Activated B cell treated with CpG ODN at 0.5 μM for 24 hours (primary cell): ENCODE measurements at regions of chr6 and their contacts with region 1.

Region 1: GRCh38 chr6:17691925-17692538 is 14.7 kb downstream of the NUP153 start:
- DNase-seq: no peak
- ATAC-seq: no peak
- H3K4me3 Mint-ChIP-seq: no peak overlapping the region
- H3K27ac Mint-ChIP-seq: no peak overlapping the region
- H3K4me1 Mint-ChIP-seq: peaks cover 51% of the 10 kb centered on the region
- H3K27me3 Mint-ChIP-seq: no peaks in the 10 kb centered on the region
- CTCF ChIP-seq: no peak

Region 2: DNA sequence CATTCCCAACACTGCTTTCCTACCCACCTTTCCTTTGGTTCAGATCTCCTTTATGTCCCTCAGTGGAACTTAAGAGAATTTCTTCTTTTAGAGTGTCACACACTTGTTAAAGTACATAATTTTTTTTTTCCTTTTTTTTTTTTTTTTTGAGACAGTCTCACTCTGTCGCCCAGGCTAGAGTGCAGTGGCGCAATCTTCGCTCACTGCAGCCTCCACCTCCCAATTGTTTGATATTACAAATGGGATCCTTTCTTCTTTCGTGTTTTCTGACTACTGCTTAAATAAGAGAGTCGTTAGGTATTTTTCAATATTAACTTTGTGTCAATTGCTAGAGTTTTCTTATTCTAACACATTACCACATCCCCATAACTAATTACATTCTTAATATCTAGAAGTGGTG is 14.4 kb before region 1 on chr6:
- CTCF ChIA-PET with region 1: no interaction called
- POLR2A ChIA-PET with region 1: no interaction called
- intact Hi-C with region 1: loop called (anchors 2 kb)
- DNase-seq: no peak
- ATAC-seq: no peak
- H3K4me3 Mint-ChIP-seq: no peak overlapping the region
- H3K27ac Mint-ChIP-seq: no peak overlapping the region
- H3K4me1 Mint-ChIP-seq: peaks cover 38% of the 10 kb centered on the region
- H3K27me3 Mint-ChIP-seq: no peaks in the 10 kb centered on the region
- CTCF ChIP-seq: no peak

Region 3: GRCh38 chr6:17725083-17725482 is 33.1 kb after region 1 on chr6:
- CTCF ChIA-PET with region 1: no interaction called
- POLR2A ChIA-PET with region 1: no interaction called
- intact Hi-C with region 1: no loop called
- DNase-seq: no peak
- ATAC-seq: no peak
- H3K4me3 Mint-ChIP-seq: no peak overlapping the region
- H3K27ac Mint-ChIP-seq: no peak overlapping the region
- H3K4me1 Mint-ChIP-seq: no peaks in the 10 kb centered on the region
- H3K27me3 Mint-ChIP-seq: peaks cover 3% of the 10 kb centered on the region
- CTCF ChIP-seq: no peak